Naive thymus-derived CD4-positive, alpha-beta T cell (primary cell): ENCODE measurements at regions of chr12 and their contacts with region 1.

Region 1: DNA sequence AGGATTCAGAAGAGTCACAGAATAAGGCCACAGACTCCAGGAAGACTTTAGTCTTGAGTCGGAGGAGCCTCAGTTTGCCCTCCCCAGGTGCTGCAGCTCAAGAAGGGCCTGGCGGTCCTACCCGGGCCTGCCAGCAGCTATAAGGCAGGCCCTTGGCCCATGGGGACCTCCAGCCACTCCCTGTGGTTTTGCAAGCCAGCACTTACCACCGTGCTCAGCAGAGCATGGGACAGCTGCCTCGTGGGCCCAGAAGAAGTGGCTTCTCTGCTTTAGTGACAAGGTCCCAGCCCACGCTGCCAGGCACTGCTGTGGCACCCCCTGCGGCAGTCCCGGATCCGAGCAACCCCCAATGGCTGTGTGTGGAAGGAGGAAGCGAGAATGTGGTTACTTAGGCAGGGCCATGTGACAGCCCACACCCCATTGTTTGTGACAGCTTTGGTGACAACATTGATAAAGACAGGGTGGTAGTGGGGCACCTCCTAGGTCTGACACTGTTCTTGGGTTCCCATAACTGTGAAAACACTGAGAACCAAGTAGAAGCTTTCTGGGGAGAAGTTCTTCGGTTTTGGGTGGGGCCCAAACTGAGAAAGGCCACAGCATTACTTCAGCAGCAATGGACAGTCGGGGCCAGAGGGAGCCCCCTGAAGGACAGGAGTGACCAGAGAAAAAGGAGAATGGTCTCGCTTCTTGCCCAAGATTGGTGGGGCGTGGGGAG is at the start of gene SELPLG:
- DNase-seq: peak; percentile 70 to 96 (median 93)
- ATAC-seq: peak; percentile 83
- H3K4me3 ChIP-seq: peak within 1 kb of the TSS; percentile 98
- H3K4me3 Mint-ChIP-seq: peak within 1 kb of the TSS; percentile 90 to 100 (median 99)
- H3K27ac ChIP-seq: peak within 1 kb of the TSS; percentile 89
- H3K27ac Mint-ChIP-seq: peak within 1 kb of the TSS; percentile 95 to 100 (median 98)
- H3K4me1 ChIP-seq: peaks cover 50 to 53% of the 10 kb centered on the region in 2 donors
- H3K4me1 Mint-ChIP-seq: peaks cover 50 to 73% (median 66%) of the 10 kb centered on the region in 7 donors
- H3K27me3 ChIP-seq: no peaks in the 10 kb centered on the region
- H3K27me3 Mint-ChIP-seq: no peaks in the 10 kb centered on the region
- total RNA-seq, gene SELPLG: 54.3 to 217 (median 154) TPM

Region 2: GRCh38 chr12:108618079-108618952 is 15.4 kb before region 1 on chr12:
- CTCF ChIA-PET with region 1: interaction called, 149 read pairs
- POLR2A ChIA-PET with region 1: interaction called, 132 read pairs
- intact Hi-C with region 1: loop called (anchors 1 kb)
- DNase-seq: peak; percentile 61 to 81 (median 74)
- ATAC-seq: peak; percentile 72
- H3K4me3 ChIP-seq: no peak overlapping the region
- H3K4me3 Mint-ChIP-seq: peak overlapping the region in 8 of 10 donors; percentile 13 to 54 (median 34)
- H3K27ac ChIP-seq: peak overlapping the region; percentile 65
- H3K27ac Mint-ChIP-seq: peak overlapping the region; percentile 67 to 92 (median 79)
- H3K4me1 ChIP-seq: peaks cover 34 to 42% of the 10 kb centered on the region in 2 donors
- H3K4me1 Mint-ChIP-seq: peaks cover 44 to 72% (median 64%) of the 10 kb centered on the region in 7 donors
- H3K27me3 ChIP-seq: no peaks in the 10 kb centered on the region
- H3K27me3 Mint-ChIP-seq: no peaks in the 10 kb centered on the region

Region 3: GRCh38 chr12:108653082-108653516 is 19.4 kb after region 1 on chr12:
- CTCF ChIA-PET with region 1: interaction called, 4 read pairs
- POLR2A ChIA-PET with region 1: interaction called, 19 read pairs
- intact Hi-C with region 1: no loop called
- DNase-seq: no peak
- ATAC-seq: no peak
- H3K4me3 ChIP-seq: no peak overlapping the region
- H3K4me3 Mint-ChIP-seq: no peak overlapping the region
- H3K27ac ChIP-seq: no peak overlapping the region
- H3K27ac Mint-ChIP-seq: peak overlapping the region in 3 of 9 donors; percentile 9 to 27 (median 15)
- H3K4me1 ChIP-seq: no peaks in the 10 kb centered on the region
- H3K4me1 Mint-ChIP-seq: peaks cover 0 to 8% (median under 1%) of the 10 kb centered on the region in 7 donors
- H3K27me3 ChIP-seq: no peaks in the 10 kb centered on the region
- H3K27me3 Mint-ChIP-seq: no peaks in the 10 kb centered on the region

Region 4: GRCh38 chr12:108691175-108691997 is 57.7 kb after region 1 on chr12:
- CTCF ChIA-PET with region 1: no interaction called
- POLR2A ChIA-PET with region 1: no interaction called
- intact Hi-C with region 1: loop called (anchors 2 kb)
- DNase-seq: peak in 8 of 9 donors; percentile 5 to 57 (median 20)
- ATAC-seq: peak; percentile 87
- H3K4me3 ChIP-seq: peak overlapping the region; percentile 43
- H3K4me3 Mint-ChIP-seq: peak overlapping the region; percentile 58 to 77 (median 70)
- H3K27ac ChIP-seq: no peak overlapping the region
- H3K27ac Mint-ChIP-seq: peak overlapping the region in 7 of 9 donors; percentile 1 to 86 (median 53)
- H3K4me1 ChIP-seq: peaks cover 28 to 32% of the 10 kb centered on the region in 2 donors
- H3K4me1 Mint-ChIP-seq: peaks cover 42 to 65% (median 63%) of the 10 kb centered on the region in 7 donors
- H3K27me3 ChIP-seq: no peaks in the 10 kb centered on the region
- H3K27me3 Mint-ChIP-seq: no peaks in the 10 kb centered on the region

Region 5: DNA sequence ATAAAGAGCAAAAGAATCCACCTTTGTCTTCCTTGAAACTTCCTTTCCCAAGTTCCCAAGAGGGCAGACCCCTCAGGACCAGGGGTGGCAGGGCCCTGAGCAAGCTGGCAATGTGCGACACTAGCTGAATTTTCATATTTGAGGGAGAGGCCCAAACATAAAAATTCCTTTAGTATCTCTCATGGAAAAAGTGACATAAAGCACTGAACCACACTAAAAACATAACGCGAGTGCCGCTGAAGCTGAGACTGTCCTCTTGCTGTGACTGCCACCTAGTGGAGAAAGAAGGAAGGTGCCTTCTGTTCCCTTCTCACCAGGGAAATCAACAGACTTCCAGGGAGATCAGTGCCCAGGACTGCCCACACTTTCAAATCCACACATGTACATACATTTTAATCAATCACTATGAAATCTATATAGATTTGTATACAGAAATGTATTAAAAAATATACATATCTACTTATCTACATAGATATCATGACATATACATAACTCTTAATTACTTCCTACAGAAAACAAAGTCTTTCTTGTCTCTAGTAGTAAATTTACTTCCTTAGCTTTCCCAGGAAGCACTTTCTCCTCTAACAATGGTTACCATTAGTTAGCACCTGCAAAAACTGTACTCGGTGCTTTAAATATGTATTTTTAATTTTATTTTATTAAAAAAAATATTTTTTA is 169.9 kb after region 1 on chr12:
- CTCF ChIA-PET with region 1: interaction called, 5 read pairs
- POLR2A ChIA-PET with region 1: no interaction called
- intact Hi-C with region 1: loop called (anchors 1 kb)
- DNase-seq: peak; percentile 25 to 78 (median 70)
- ATAC-seq: peak; percentile 93
- H3K4me3 ChIP-seq: no peak overlapping the region
- H3K4me3 Mint-ChIP-seq: no peak overlapping the region
- H3K27ac ChIP-seq: no peak overlapping the region
- H3K27ac Mint-ChIP-seq: peak overlapping the region in 3 of 9 donors; percentile 37 to 62 (median 48)
- H3K4me1 ChIP-seq: peaks cover 0 to 3% of the 10 kb centered on the region in 2 donors
- H3K4me1 Mint-ChIP-seq: peaks cover 0 to 10% (median 3%) of the 10 kb centered on the region in 7 donors
- H3K27me3 ChIP-seq: no peaks in the 10 kb centered on the region
- H3K27me3 Mint-ChIP-seq: no peaks in the 10 kb centered on the region

Region 6: GRCh38 chr12:108856428-108857157 is 222.9 kb after region 1 on chr12:
- CTCF ChIA-PET with region 1: no interaction called
- POLR2A ChIA-PET with region 1: interaction called, 6 read pairs
- intact Hi-C with region 1: loop called in 1 of 2 experiments (anchors 1 kb)
- DNase-seq: peak; percentile 35 to 77 (median 54)
- ATAC-seq: peak; percentile 68
- H3K4me3 ChIP-seq: peak overlapping the region; percentile 84
- H3K4me3 Mint-ChIP-seq: peak overlapping the region; percentile 89 to 97 (median 94)
- H3K27ac ChIP-seq: peak overlapping the region; percentile 62
- H3K27ac Mint-ChIP-seq: peak overlapping the region; percentile 76 to 99 (median 92)
- H3K4me1 ChIP-seq: peaks cover 18 to 23% of the 10 kb centered on the region in 2 donors
- H3K4me1 Mint-ChIP-seq: peaks cover 26 to 56% (median 47%) of the 10 kb centered on the region in 7 donors
- H3K27me3 ChIP-seq: no peaks in the 10 kb centered on the region
- H3K27me3 Mint-ChIP-seq: peaks cover 0 to 2% (median 0%) of the 10 kb centered on the region in 5 donors

Region 7: DNA sequence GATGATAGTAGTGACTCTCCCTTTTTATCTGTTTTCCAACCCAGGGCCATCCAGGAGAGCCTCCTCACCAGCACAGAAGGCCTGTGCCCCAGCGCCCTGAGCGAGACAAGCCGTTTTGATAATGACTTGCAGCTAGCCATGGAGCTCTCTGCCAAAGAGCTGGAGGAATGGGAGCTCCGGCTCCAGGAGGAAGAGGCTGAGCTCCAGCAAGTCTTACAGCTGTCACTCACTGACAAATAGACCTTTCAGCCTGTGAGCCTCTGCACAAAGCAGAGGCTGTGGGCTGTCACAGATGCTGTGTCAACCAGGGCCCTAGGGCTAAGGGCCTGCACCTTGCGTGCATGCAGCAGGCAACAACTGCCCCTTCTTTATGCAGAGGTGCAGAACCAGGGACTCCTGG is 1403.6 kb after region 1 on chr12:
- CTCF ChIA-PET with region 1: no interaction called
- POLR2A ChIA-PET with region 1: no interaction called
- intact Hi-C with region 1: no loop called
- DNase-seq: no peak
- ATAC-seq: no peak
- H3K4me3 ChIP-seq: no peak overlapping the region
- H3K4me3 Mint-ChIP-seq: no peak overlapping the region
- H3K27ac ChIP-seq: no peak overlapping the region
- H3K27ac Mint-ChIP-seq: peak overlapping the region in 2 of 9 donors; percentile 56 to 86
- H3K4me1 ChIP-seq: peaks cover 8 to 18% of the 10 kb centered on the region in 2 donors
- H3K4me1 Mint-ChIP-seq: peaks cover 17 to 50% (median 25%) of the 10 kb centered on the region in 7 donors
- H3K27me3 ChIP-seq: no peaks in the 10 kb centered on the region
- H3K27me3 Mint-ChIP-seq: no peaks in the 10 kb centered on the region